MCF 10A (cell line): ENCODE measurements at regions of chrX and their contacts with region 1.

Region 1: DNA sequence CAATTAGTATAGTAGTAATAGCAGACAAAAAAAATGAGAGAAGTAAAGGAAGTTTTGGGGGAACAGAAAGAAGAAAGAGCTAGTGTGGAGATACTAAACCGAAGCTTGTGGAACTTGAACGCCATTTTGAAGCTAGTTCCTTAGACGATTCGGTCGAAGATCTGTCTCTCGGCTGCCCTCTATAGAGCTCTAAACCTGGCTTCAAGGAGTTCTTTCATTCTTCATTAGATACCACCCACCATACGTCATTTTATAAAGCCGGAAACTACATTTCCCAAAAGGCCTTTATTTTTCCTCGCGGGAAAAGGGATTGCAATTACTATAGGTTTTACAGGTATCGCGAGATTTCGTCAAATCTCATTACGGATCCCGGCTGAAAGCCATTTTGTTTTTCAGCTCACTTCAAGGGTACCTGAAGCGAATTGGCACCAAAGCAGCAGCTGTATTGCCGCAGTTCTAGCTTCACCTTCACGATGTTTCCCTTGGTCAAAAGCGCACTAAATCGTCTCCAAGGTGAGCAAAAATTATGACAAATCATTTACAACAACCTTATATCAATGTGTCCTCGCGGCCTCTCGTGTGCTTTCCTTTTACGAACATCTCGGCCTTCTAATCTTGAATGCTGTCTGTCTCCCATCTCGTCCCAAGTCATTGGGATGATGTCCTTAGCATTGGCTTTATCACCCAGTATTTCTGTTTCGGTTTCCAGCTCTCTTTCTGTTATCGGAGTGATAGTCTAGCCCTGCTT is at the start of gene COX7B:
- DNase-seq: peak; percentile 94
- H3K4me3 Mint-ChIP-seq: peak within 1 kb of the TSS; percentile 91
- H3K27ac Mint-ChIP-seq: peak within 1 kb of the TSS; percentile 98
- H3K4me1 Mint-ChIP-seq: peaks cover 4% of the 10 kb centered on the region
- H3K27me3 Mint-ChIP-seq: no peaks in the 10 kb centered on the region
- CTCF ChIP-seq: peak; percentile 16
- total RNA-seq, gene COX7B: 245 and 344 TPM in 2 replicates

Region 2: GRCh38 chrX:77342004-77342403 is 557.3 kb before region 1 on chrX:
- CTCF ChIA-PET with region 1: no interaction called
- POLR2A ChIA-PET with region 1: no interaction called
- intact Hi-C with region 1: no loop called
- DNase-seq: no peak
- H3K4me3 Mint-ChIP-seq: no peak overlapping the region
- H3K27ac Mint-ChIP-seq: no peak overlapping the region
- H3K4me1 Mint-ChIP-seq: no peaks in the 10 kb centered on the region
- H3K27me3 Mint-ChIP-seq: no peaks in the 10 kb centered on the region
- CTCF ChIP-seq: no peak

Region 3: DNA sequence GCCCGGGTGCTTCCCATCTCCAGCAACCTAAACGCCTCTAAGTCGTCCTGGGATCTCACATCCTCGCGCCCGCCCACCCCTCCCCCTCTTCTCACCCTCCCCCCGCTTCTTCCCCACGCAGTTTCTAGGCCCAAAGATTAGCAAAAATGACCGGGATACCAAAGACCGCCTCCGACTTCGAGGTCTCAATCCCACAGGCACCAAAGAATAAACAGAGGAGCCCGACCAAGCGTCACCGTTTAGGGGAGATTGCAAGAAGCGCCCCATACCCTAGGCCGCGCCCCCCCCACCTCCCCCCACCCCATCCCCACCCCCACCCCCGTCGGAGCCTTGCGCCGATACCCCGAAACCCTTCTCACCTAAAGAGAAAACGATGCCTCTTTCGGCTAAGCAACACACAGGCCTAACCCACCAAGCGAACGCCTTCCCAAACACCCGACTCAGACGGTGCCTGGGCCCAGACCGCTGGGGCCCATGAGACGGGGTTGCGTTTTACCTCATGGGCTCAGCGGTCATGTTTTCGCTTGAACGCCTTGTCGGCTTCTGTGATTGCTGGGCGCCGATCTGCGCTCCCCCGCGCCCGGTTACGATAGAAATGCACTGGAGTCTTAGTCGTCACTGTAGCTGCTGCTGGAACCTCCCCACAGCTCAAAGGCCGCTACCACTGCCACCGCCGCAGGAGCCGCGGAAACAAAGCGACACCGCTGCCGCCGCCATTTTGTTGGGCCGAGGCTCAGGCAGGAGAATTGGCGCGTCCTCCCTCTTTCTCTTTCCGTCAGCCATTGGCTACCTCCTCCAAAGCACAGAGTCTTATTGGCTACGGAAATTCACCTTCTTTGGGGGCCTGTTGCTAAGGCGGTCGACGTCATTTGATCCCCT is 113.5 kb before region 1 on chrX and contains the start of gene ATRX:
- CTCF ChIA-PET with region 1: no interaction called
- POLR2A ChIA-PET with region 1: interaction called, 13 read pairs
- intact Hi-C with region 1: no loop called
- DNase-seq: peak; percentile 77
- H3K4me3 Mint-ChIP-seq: peak within 1 kb of the TSS; percentile 99
- H3K27ac Mint-ChIP-seq: peak within 1 kb of the TSS; percentile 100
- H3K4me1 Mint-ChIP-seq: no peaks in the 10 kb centered on the region
- H3K27me3 Mint-ChIP-seq: no peaks in the 10 kb centered on the region
- CTCF ChIP-seq: no peak
- total RNA-seq, gene ATRX: 57.3 and 70.2 TPM in 2 replicates

Region 4: DNA sequence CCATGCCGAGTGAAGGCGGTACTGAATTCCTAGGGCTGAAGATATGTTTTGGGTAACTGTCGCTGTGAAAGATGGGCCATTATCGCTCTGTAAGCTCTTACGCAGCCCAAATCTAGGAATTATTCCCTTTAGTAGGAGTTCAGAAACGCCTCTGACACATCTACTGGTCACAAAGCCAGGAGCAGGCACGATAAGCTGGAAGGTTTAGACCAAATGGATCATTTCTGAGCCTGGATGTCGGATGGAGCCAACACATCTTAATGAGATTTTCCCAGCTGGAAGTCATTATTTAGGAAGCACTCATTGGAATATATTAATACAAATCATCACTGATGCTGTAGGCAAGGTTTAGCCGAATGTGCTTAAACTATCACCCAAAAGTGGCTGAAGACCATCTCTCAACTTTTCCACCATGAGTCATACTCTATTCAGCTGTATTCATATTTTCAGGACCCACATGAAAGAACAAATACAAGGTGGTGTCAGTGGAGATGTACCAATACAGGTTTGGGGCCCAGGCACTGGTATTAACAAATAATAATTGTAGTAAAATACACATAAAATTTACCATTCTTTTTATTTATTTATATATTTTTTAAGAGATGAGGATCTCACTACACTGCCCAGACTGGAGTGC is 79.0 kb before region 1 on chrX:
- CTCF ChIA-PET with region 1: no interaction called
- POLR2A ChIA-PET with region 1: no interaction called
- intact Hi-C with region 1: no loop called
- DNase-seq: no peak
- H3K4me3 Mint-ChIP-seq: no peak overlapping the region
- H3K27ac Mint-ChIP-seq: no peak overlapping the region
- H3K4me1 Mint-ChIP-seq: no peaks in the 10 kb centered on the region
- H3K27me3 Mint-ChIP-seq: no peaks in the 10 kb centered on the region
- CTCF ChIP-seq: no peak

Region 5: DNA sequence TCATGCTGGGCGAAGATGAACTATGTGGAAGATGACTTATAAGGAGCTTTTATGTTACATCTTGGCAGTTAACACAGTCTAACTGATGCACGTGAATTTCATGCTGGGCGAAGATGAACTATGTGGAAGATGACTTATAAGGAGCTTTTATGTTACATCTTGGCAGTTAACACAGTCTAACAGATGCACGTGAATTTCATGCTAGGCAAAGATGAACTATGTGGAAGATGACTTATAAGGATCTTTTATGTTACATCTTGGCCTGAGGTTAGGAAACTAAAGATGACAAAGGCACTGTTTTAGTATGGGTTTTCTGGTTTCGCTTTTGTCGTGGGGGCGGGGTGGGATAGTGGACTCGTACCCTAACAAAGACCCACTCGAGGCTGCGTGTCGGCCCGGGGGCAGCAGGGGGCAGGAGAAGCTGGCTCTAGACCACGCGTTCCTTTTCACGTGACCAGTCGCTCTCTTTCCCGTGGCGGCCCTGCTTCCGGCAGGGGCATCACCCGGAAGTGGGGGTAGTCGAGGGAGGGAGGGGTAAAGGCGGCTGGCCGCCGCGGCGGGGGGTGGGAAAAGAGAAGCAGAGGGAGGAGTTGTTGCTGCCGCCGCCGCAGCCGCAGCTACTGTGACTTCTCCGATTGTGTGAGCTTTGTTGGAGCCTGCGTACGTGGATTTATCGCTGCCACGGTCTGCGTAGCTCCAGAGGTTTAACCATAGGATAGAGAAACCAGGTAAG is 11.0 kb after region 1 on chrX and contains the start of gene ATP7A:
- CTCF ChIA-PET with region 1: interaction called, 9 read pairs
- POLR2A ChIA-PET with region 1: interaction called, 77 read pairs
- intact Hi-C with region 1: no loop called
- DNase-seq: peak; percentile 79
- H3K4me3 Mint-ChIP-seq: peak within 1 kb of the TSS; percentile 91
- H3K27ac Mint-ChIP-seq: peak within 1 kb of the TSS; percentile 85
- H3K4me1 Mint-ChIP-seq: no peaks in the 10 kb centered on the region
- H3K27me3 Mint-ChIP-seq: no peaks in the 10 kb centered on the region
- CTCF ChIP-seq: no peak
- total RNA-seq, gene ATP7A: 3.8 and 4.8 TPM in 2 replicates

Region 6: DNA sequence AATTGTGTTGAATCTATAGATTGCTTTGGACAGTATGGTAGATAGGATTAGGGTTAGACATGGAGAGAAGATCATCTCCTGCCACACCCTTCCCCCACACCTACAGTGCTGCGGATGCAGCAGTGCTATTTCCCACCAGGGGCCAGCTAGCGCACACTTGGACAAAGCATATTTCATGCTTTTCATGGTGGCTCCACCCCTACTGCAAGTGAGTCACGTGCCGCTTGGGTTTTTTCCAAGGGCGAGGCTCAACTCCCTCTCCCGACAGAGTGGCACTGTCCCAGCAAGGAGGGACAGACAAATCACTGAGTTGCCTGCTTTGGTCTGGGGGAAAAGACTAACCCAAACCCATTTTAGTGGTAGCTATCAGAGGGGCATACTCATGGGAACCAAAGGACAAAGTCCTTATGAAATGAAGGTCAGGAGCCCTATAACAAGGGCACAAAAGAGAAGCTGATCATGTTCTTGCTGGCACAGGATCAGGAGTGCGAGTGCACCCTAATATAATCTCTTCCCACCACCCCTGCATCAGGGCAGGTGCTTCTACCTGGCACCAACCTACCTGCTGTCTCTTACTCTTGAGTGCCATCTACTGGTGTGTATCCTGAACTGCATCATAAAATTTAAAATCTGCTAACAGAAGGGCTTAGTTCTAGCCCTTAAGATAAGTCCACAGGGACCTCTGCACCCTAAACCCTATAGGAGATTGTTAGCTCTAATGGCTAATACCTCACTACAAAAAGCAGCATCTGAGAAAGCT is 125.3 kb after region 1 on chrX:
- CTCF ChIA-PET with region 1: interaction called, 11 read pairs
- POLR2A ChIA-PET with region 1: interaction called, 4 read pairs
- intact Hi-C with region 1: no loop called
- DNase-seq: peak; percentile 49
- H3K4me3 Mint-ChIP-seq: no peak overlapping the region
- H3K27ac Mint-ChIP-seq: no peak overlapping the region
- H3K4me1 Mint-ChIP-seq: no peaks in the 10 kb centered on the region
- H3K27me3 Mint-ChIP-seq: no peaks in the 10 kb centered on the region
- CTCF ChIP-seq: peak; percentile 71

Region 7: GRCh38 chrX:78103623-78104446 is 204.6 kb after region 1 on chrX and contains the start of gene PGK1:
- CTCF ChIA-PET with region 1: interaction called, 7 read pairs
- POLR2A ChIA-PET with region 1: interaction called, 15 read pairs
- intact Hi-C with region 1: no loop called
- DNase-seq: peak; percentile 92
- H3K4me3 Mint-ChIP-seq: peak within 1 kb of the TSS; percentile 78
- H3K27ac Mint-ChIP-seq: peak within 1 kb of the TSS; percentile 86
- H3K4me1 Mint-ChIP-seq: peaks cover 18% of the 10 kb centered on the region
- H3K27me3 Mint-ChIP-seq: no peaks in the 10 kb centered on the region
- CTCF ChIP-seq: no peak
- total RNA-seq, gene PGK1: 279 and 310 TPM in 2 replicates